GM12878 (cell line): ENCODE measurements at regions of chr2 and their contacts with region 1.

Region 1: GRCh38 chr2:128321784-128322714 is 3.4 kb upstream of the HS6ST1 start:
- DNase-seq: no peak
- ATAC-seq: peak; percentile 71
- H3K4me3 ChIP-seq: peak overlapping the region; percentile 70; the same call in 1 of the 2 replicates
- H3K27ac ChIP-seq: peak overlapping the region; percentile 18; the same call in 1 of the 2 replicates
- H3K4me1 ChIP-seq: peaks cover 3% of the 10 kb centered on the region
- H3K27me3 ChIP-seq: no peaks in the 10 kb centered on the region; a peak in 1 of 4 replicates
- CTCF ChIP-seq: peak; percentile 73 to 93 (median 93); a peak in 5 of 6 replicates
- EP300 ChIP-seq: no peak
- POLR2A ChIP-seq: peak; percentile 70
- RAD21 ChIP-seq: peak; percentile 67

Region 2: DNA sequence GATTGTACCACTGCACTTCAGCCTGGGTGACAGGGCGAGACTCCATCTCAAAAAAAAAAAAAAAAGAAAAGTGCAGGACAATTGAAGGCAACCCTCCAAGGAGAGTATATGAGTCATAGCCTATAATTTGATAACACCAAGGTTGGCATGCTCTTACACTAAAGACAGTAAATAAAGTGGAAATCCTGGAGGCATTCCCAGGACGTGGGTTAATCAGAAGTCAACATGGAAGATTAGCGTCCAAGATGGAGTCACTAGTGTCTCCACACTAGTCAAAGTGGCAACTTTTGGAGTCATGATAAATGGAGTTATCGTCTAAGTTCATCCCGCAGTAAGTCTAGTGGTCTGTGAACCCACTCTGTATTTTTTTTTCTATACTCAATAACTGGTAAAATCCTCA is 252.3 kb before region 1 on chr2:
- CTCF ChIA-PET with region 1: no interaction called
- POLR2A ChIA-PET with region 1: no interaction called
- RAD21 ChIA-PET with region 1: no interaction called
- SMC1A ChIA-PET with region 1: no interaction called
- in situ Hi-C with region 1: no loop called
- intact Hi-C with region 1: loop called (anchors 10 kb)
- DNase-seq: no peak
- ATAC-seq: no peak
- H3K4me3 ChIP-seq: no peak overlapping the region
- H3K27ac ChIP-seq: no peak overlapping the region
- H3K4me1 ChIP-seq: no peaks in the 10 kb centered on the region
- H3K27me3 ChIP-seq: no peaks in the 10 kb centered on the region
- CTCF ChIP-seq: no peak
- EP300 ChIP-seq: no peak
- POLR2A ChIP-seq: no peak
- RAD21 ChIP-seq: no peak

Region 3: DNA sequence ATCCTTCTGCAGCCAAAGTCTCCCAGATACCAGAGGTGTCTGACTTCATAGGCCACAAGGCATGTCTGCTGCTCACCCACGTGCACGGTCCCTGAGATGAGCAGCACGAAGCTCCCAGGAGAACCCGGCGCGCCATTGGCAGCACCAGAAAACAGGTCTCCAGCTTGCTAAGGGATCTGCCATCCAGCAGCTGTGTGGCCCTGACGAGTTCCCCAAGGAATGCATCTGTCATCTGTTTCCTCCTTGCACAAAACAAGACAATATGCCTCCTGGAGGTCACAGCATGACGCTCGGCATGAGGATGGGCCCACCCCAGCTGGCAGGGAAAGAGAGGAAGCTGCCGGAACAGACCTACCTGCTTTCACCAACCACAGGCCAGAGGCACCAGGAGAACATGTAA is 32.6 kb before region 1 on chr2:
- CTCF ChIA-PET with region 1: no interaction called
- POLR2A ChIA-PET with region 1: no interaction called
- RAD21 ChIA-PET with region 1: no interaction called
- SMC1A ChIA-PET with region 1: no interaction called
- in situ Hi-C with region 1: no loop called
- intact Hi-C with region 1: no loop called
- DNase-seq: no peak
- ATAC-seq: no peak
- H3K4me3 ChIP-seq: no peak overlapping the region
- H3K27ac ChIP-seq: no peak overlapping the region
- H3K4me1 ChIP-seq: no peaks in the 10 kb centered on the region
- H3K27me3 ChIP-seq: no peaks in the 10 kb centered on the region
- CTCF ChIP-seq: no peak
- EP300 ChIP-seq: no peak
- POLR2A ChIP-seq: no peak
- RAD21 ChIP-seq: no peak

Region 4: GRCh38 chr2:128332091-128332634 is 10.1 kb after region 1 on chr2:
- CTCF ChIA-PET with region 1: no interaction called
- POLR2A ChIA-PET with region 1: no interaction called
- RAD21 ChIA-PET with region 1: no interaction called
- SMC1A ChIA-PET with region 1: no interaction called
- in situ Hi-C with region 1: no loop called
- intact Hi-C with region 1: no loop called
- DNase-seq: no peak
- ATAC-seq: no peak
- H3K4me3 ChIP-seq: no peak overlapping the region
- H3K27ac ChIP-seq: no peak overlapping the region
- H3K4me1 ChIP-seq: no peaks in the 10 kb centered on the region
- H3K27me3 ChIP-seq: no peaks in the 10 kb centered on the region
- CTCF ChIP-seq: no peak
- EP300 ChIP-seq: no peak
- POLR2A ChIP-seq: no peak
- RAD21 ChIP-seq: no peak

Region 5: GRCh38 chr2:129396980-129397599 is 1075.0 kb after region 1 on chr2:
- CTCF ChIA-PET with region 1: no interaction called
- POLR2A ChIA-PET with region 1: no interaction called
- RAD21 ChIA-PET with region 1: no interaction called
- SMC1A ChIA-PET with region 1: no interaction called
- in situ Hi-C with region 1: no loop called
- intact Hi-C with region 1: loop called (anchors 1 kb)
- DNase-seq: peak; percentile 21
- ATAC-seq: peak; percentile 94
- H3K4me3 ChIP-seq: no peak overlapping the region
- H3K27ac ChIP-seq: no peak overlapping the region
- H3K4me1 ChIP-seq: no peaks in the 10 kb centered on the region; the same call in 1 of the 2 replicates
- H3K27me3 ChIP-seq: no peaks in the 10 kb centered on the region
- CTCF ChIP-seq: peak; percentile 78 to 87 (median 81)
- EP300 ChIP-seq: no peak
- POLR2A ChIP-seq: no peak
- RAD21 ChIP-seq: peak; percentile 94

Region 6: GRCh38 chr2:129923265-129924091 is 1601.4 kb after region 1 on chr2:
- CTCF ChIA-PET with region 1: no interaction called
- POLR2A ChIA-PET with region 1: no interaction called
- RAD21 ChIA-PET with region 1: no interaction called
- SMC1A ChIA-PET with region 1: no interaction called
- in situ Hi-C with region 1: no loop called
- intact Hi-C with region 1: loop called (anchors 10 kb)
- DNase-seq: no peak
- ATAC-seq: peak; percentile 67
- H3K4me3 ChIP-seq: no peak overlapping the region
- H3K27ac ChIP-seq: no peak overlapping the region
- H3K4me1 ChIP-seq: no peaks in the 10 kb centered on the region
- H3K27me3 ChIP-seq: peaks cover 0 to 2% of the 10 kb centered on the region in 2 experiments; a peak in 2 of 4 replicates
- CTCF ChIP-seq: peak; percentile 22 to 42 (median 41); a peak in 4 of 6 replicates
- EP300 ChIP-seq: no peak
- POLR2A ChIP-seq: no peak
- RAD21 ChIP-seq: peak; percentile 52